PC-3 (cell line): ENCODE measurements at regions of chr16 and their contacts with region 1.

Region 1: GRCh38 chr16:27367461-27368357 is 34.3 kb upstream of the IL21R start:
- DNase-seq: peak; percentile 71
- ATAC-seq: peak; percentile 63
- H3K4me3 ChIP-seq: no peak overlapping the region
- H3K27ac ChIP-seq: no peak overlapping the region
- H3K4me1 ChIP-seq: peaks cover 26% of the 10 kb centered on the region
- H3K27me3 ChIP-seq: no peaks in the 10 kb centered on the region
- CTCF ChIP-seq: peak; percentile 67

Region 2: GRCh38 chr16:26993963-26994362 is 373.7 kb before region 1 on chr16:
- CTCF ChIA-PET with region 1: no interaction called
- POLR2A ChIA-PET with region 1: no interaction called
- intact Hi-C with region 1: no loop called
- DNase-seq: no peak
- ATAC-seq: no peak
- H3K4me3 ChIP-seq: no peak overlapping the region
- H3K27ac ChIP-seq: no peak overlapping the region
- H3K4me1 ChIP-seq: no peaks in the 10 kb centered on the region
- H3K27me3 ChIP-seq: 0 out of 2 replicates have a peak, but pooled peaks cover 6% of the 10 kb centered on the region
- CTCF ChIP-seq: no peak

Region 3: GRCh38 chr16:27154705-27155521 is 212.8 kb before region 1 on chr16:
- CTCF ChIA-PET with region 1: no interaction called
- POLR2A ChIA-PET with region 1: interaction called, 8 read pairs
- intact Hi-C with region 1: loop called (anchors 5 kb)
- DNase-seq: peak; percentile 41
- ATAC-seq: peak; percentile 60; the same call in 1 of the 2 replicates
- H3K4me3 ChIP-seq: no peak overlapping the region
- H3K27ac ChIP-seq: no peak overlapping the region
- H3K4me1 ChIP-seq: no peaks in the 10 kb centered on the region
- H3K27me3 ChIP-seq: no peaks in the 10 kb centered on the region
- CTCF ChIP-seq: peak; percentile 84

Region 4: GRCh38 chr16:27174007-27174406 is 193.7 kb before region 1 on chr16:
- CTCF ChIA-PET with region 1: no interaction called
- POLR2A ChIA-PET with region 1: no interaction called
- intact Hi-C with region 1: loop called (anchors 1 kb)
- DNase-seq: peak; percentile 67
- ATAC-seq: peak; percentile 44
- H3K4me3 ChIP-seq: no peak overlapping the region
- H3K27ac ChIP-seq: peak overlapping the region; percentile 59
- H3K4me1 ChIP-seq: peaks cover 36% of the 10 kb centered on the region
- H3K27me3 ChIP-seq: no peaks in the 10 kb centered on the region
- CTCF ChIP-seq: no peak

Region 5: GRCh38 chr16:27235055-27235937 is 132.4 kb before region 1 on chr16:
- CTCF ChIA-PET with region 1: interaction called, 7 read pairs
- POLR2A ChIA-PET with region 1: interaction called, 3 read pairs
- intact Hi-C with region 1: loop called (anchors 1 kb)
- DNase-seq: peak; percentile 68
- ATAC-seq: peak; percentile 80
- H3K4me3 ChIP-seq: no peak overlapping the region
- H3K27ac ChIP-seq: peak overlapping the region; percentile 12
- H3K4me1 ChIP-seq: peaks cover 8% of the 10 kb centered on the region; the same call in 1 of the 2 replicates
- H3K27me3 ChIP-seq: no peaks in the 10 kb centered on the region
- CTCF ChIP-seq: peak; percentile 89

Region 6: GRCh38 chr16:27313422-27314160 is 54.1 kb before region 1 on chr16 and contains the start of gene IL4R:
- CTCF ChIA-PET with region 1: interaction called, 6 read pairs
- POLR2A ChIA-PET with region 1: no interaction called
- intact Hi-C with region 1: loop called (anchors 5 kb)
- DNase-seq: peak; percentile 48
- ATAC-seq: peak; percentile 39
- H3K4me3 ChIP-seq: peak within 1 kb of the TSS; percentile 93
- H3K27ac ChIP-seq: peak within 1 kb of the TSS; percentile 98
- H3K4me1 ChIP-seq: peaks cover 36% of the 10 kb centered on the region
- H3K27me3 ChIP-seq: no peaks in the 10 kb centered on the region
- CTCF ChIP-seq: no peak
- total RNA-seq, gene IL4R: 25.1 and 32.1 TPM in 2 replicates